ENCODE measurements at regions of chr9 and their contacts with region 1.

Region 1: DNA sequence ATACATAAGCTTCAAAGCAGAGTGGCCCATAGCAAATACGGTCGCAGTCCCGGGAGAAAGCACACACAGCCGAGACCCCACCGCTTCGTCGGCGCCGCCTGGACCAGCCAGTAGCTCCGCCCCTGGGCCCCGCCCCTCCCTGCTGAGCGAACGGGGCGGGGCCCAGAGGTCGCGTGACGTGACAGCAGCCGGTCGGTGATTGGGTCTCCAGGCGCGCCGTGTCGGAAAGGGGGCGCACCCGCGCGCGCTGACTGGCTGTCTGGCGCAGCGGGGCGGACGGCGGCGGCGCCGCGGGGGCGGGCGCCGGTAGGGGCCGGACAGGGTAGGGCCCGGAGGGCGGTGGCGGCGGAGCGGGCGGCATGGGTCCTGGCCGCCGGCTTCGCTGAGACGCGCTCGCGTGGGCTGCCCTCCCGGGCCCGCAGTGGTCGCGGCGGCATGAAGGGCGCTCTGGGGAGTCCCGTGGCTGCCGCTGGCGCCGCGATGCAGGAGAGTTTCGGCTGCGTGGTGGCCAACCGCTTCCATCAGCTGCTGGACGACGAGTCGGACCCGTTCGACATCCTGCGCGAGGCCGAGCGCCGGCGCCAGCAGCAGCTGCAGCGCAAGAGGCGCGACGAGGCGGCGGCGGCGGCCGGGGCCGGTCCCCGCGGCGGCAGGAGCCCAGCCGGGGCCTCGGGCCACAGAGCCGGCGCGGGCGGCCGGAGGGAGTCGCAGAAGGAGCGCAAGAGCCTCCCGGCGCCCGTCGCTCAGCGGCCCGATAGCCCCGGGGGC is at the start of gene HABP4:
- DNase-seq: peak; percentile 98
- H3K4me3 ChIP-seq: peak within 1 kb of the TSS; percentile 54 to 61 (median 59)
- H3K27ac ChIP-seq: peak within 1 kb of the TSS in 2 of 3 donors; percentile 43 to 73
- H3K4me1 ChIP-seq: peaks cover 3 to 4% of the 10 kb centered on the region in 2 donors
- H3K27me3 ChIP-seq: no peaks in the 10 kb centered on the region
- CTCF ChIP-seq: no peak
- POLR2A ChIP-seq: peak; percentile 95 to 96
- total RNA-seq, gene HABP4: 18.4 to 24.1 (median 20.8) TPM

Region 2: GRCh38 chr9:96327694-96328352 is 122.2 kb before region 1 on chr9:
- intact Hi-C with region 1: loop called (anchors 10 kb)
- DNase-seq: peak; percentile 19
- H3K4me3 ChIP-seq: no peak overlapping the region
- H3K27ac ChIP-seq: no peak overlapping the region
- H3K4me1 ChIP-seq: no peaks in the 10 kb centered on the region
- H3K27me3 ChIP-seq: no peaks in the 10 kb centered on the region
- CTCF ChIP-seq: peak; percentile 59 to 91 (median 82)
- POLR2A ChIP-seq: no peak

Region 3: GRCh38 chr9:96500696-96501632 is 50.9 kb after region 1 on chr9:
- intact Hi-C with region 1: loop called (anchors 10 kb)
- DNase-seq: no peak
- H3K4me3 ChIP-seq: no peak overlapping the region
- H3K27ac ChIP-seq: no peak overlapping the region
- H3K4me1 ChIP-seq: peaks cover 4 to 13% of the 10 kb centered on the region in 2 donors
- H3K27me3 ChIP-seq: no peaks in the 10 kb centered on the region
- CTCF ChIP-seq: no peak
- POLR2A ChIP-seq: no peak

Region 4: GRCh38 chr9:96566498-96567207 is 116.6 kb after region 1 on chr9:
- intact Hi-C with region 1: loop called (anchors 5 kb)
- DNase-seq: peak; percentile 81 to 84
- H3K4me3 ChIP-seq: peak overlapping the region; percentile 27 to 76 (median 38)
- H3K27ac ChIP-seq: peak overlapping the region; percentile 86 to 98 (median 94)
- H3K4me1 ChIP-seq: peaks cover 4 to 5% of the 10 kb centered on the region in 2 donors
- H3K27me3 ChIP-seq: no peaks in the 10 kb centered on the region
- CTCF ChIP-seq: peak; percentile 43 to 80 (median 64)
- POLR2A ChIP-seq: peak in 1 of 2 donors; percentile 46

Region 5: DNA sequence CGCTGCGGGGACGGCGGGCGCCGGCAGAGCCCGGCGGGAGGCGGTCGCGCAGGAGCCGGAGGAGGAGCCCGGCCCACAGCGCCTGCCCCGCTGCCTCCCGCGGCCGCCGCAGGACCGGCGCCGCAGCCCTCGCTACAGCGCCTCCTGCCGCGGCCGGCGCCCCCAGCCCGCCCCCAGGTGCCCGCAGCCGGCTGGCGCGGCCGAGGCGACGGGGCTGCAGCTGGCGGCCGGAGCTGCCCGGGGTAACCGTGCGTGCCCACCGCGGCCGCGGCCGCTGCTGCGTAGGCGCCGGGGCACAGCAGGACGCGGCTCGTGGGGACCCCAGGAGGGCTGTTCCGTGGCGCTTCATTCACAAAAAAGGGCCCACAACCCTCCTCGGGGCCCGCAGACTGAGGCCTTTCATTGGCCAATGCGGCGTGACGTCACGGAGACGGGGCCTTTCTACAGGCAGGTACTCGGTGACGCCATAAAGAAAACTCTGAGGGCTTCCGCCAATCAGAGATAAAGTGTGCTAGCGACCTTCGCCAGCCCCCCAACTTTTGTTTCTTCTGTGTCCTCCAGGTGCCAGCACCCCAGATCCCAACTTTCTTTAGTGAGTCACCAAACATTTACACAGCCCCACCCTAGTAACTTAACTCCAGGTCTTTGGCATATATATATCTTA is 169.6 kb after region 1 on chr9 and contains the start of gene CDC14B:
- intact Hi-C with region 1: loop called (anchors 10 kb)
- DNase-seq: peak; percentile 98 to 99
- H3K4me3 ChIP-seq: peak within 1 kb of the TSS; percentile 11 to 91 (median 67)
- H3K27ac ChIP-seq: peak within 1 kb of the TSS; percentile 61 to 83 (median 75)
- H3K4me1 ChIP-seq: peaks cover 0 to 5% of the 10 kb centered on the region in 2 donors
- H3K27me3 ChIP-seq: no peaks in the 10 kb centered on the region
- CTCF ChIP-seq: peak in 3 of 6 experiments; percentile 37 to 45 (median 44)
- POLR2A ChIP-seq: peak in 1 of 2 donors; percentile 72
- total RNA-seq, gene CDC14B: 39.7 to 87.4 (median 56.3) TPM

Region 6: DNA sequence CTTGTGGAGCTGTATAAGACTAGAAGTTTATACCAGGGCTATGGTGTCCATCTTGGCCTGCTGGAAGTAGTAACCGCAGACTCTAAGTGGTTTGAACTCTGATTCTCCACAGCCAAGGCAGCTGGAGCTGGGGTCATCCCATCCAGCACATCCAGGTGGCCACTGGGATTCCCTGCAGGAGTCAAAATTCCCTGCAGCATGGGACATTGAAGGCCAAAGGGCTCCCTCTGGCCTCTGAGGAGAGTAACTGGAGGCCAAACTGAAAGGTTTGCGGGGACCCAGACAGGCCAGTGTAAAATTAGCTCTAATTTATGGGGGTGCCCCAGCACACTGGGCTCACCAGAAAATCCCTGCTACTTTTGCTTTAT is 217.3 kb after region 1 on chr9:
- intact Hi-C with region 1: loop called (anchors 5 kb)
- DNase-seq: no peak
- H3K4me3 ChIP-seq: no peak overlapping the region
- H3K27ac ChIP-seq: no peak overlapping the region
- H3K4me1 ChIP-seq: no peaks in the 10 kb centered on the region
- H3K27me3 ChIP-seq: no peaks in the 10 kb centered on the region
- CTCF ChIP-seq: no peak
- POLR2A ChIP-seq: no peak